ENCODE measurements at regions of chr14 and their contacts with region 1.

Region 1: GRCh38 chr14:52402812-52403526 is 88.9 kb downstream of the PTGER2 start:
- DNase-seq: no peak
- CTCF ChIP-seq: no peak

Region 2: GRCh38 chr14:52380294-52380693 is 22.7 kb before region 1 on chr14:
- CTCF ChIA-PET with region 1: interaction called, 12 read pairs
- POLR2A ChIA-PET with region 1: no interaction called
- DNase-seq: peak; percentile 57
- CTCF ChIP-seq: no peak

Region 3: GRCh38 chr14:52602131-52602530 is 199.2 kb after region 1 on chr14:
- CTCF ChIA-PET with region 1: no interaction called
- POLR2A ChIA-PET with region 1: no interaction called
- DNase-seq: peak; percentile 9
- CTCF ChIP-seq: no peak